T-cell (primary cell): ENCODE measurements at regions of chr15 and their contacts with region 1.

Region 1: DNA sequence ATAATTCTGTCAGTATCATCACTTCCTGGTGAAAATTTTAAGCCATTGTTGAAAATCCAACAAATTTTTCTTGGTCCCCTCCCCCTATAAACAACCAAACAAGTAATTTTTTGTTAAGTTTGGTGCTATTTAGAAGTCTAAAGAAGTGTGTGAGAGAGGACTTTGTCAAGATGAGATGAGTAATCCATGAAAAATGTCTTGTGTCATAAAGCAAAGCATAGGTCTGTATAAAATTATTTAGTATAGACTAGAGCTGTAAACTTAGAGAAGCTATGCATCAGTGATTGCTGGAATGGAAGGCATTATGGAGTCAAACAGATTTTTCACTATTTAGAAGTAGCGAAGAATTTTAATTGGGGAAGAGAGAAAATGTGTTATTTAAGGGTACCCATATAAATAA is 31.4 kb downstream of the MAPK6 start:
- DNase-seq: no peak
- ATAC-seq: no peak
- H3K4me3 ChIP-seq: no peak overlapping the region
- H3K4me3 Mint-ChIP-seq: no peak overlapping the region
- H3K27ac ChIP-seq: no peak overlapping the region
- H3K27ac Mint-ChIP-seq: no peak overlapping the region
- H3K4me1 ChIP-seq: peaks cover 7 to 9% of the 10 kb centered on the region in 2 experiments
- H3K4me1 Mint-ChIP-seq: peaks cover 15 to 25% (median 21%) of the 10 kb centered on the region in 3 donors
- H3K27me3 ChIP-seq: no peaks in the 10 kb centered on the region
- H3K27me3 Mint-ChIP-seq: no peaks in the 10 kb centered on the region

Region 2: GRCh38 chr15:52019388-52020220 is 30.8 kb before region 1 on chr15:
- CTCF ChIA-PET with region 1: interaction called, 3 to 10 read pairs
- POLR2A ChIA-PET with region 1: interaction called in 1 of 2 experiments, 7 read pairs
- DNase-seq: peak; percentile 7 to 68 (median 36)
- ATAC-seq: peak; percentile 65 to 71 (median 68)
- H3K4me3 ChIP-seq: peak overlapping the region; percentile 65 to 81
- H3K4me3 Mint-ChIP-seq: peak overlapping the region; percentile 83 to 97 (median 93)
- H3K27ac ChIP-seq: peak overlapping the region; percentile 95
- H3K27ac Mint-ChIP-seq: peak overlapping the region; percentile 96 to 98
- H3K4me1 ChIP-seq: peaks cover 16% of the 10 kb centered on the region in 2 experiments
- H3K4me1 Mint-ChIP-seq: peaks cover 37 to 38% (median 37%) of the 10 kb centered on the region in 3 donors
- H3K27me3 ChIP-seq: peaks cover 0 to 4% of the 10 kb centered on the region in 2 experiments
- H3K27me3 Mint-ChIP-seq: no peaks in the 10 kb centered on the region

Region 3: GRCh38 chr15:52163321-52164190 is 113.1 kb after region 1 on chr15:
- CTCF ChIA-PET with region 1: no interaction called
- POLR2A ChIA-PET with region 1: no interaction called
- DNase-seq: peak in 13 of 35 experiments; percentile 6 to 42 (median 16)
- ATAC-seq: peak in 2 of 4 experiments; percentile 37 to 40
- H3K4me3 ChIP-seq: no peak overlapping the region
- H3K4me3 Mint-ChIP-seq: no peak overlapping the region
- H3K27ac ChIP-seq: no peak overlapping the region
- H3K27ac Mint-ChIP-seq: no peak overlapping the region
- H3K4me1 ChIP-seq: peaks cover 2 to 5% of the 10 kb centered on the region in 2 experiments
- H3K4me1 Mint-ChIP-seq: peaks cover 34 to 44% (median 36%) of the 10 kb centered on the region in 3 donors
- H3K27me3 ChIP-seq: no peaks in the 10 kb centered on the region
- H3K27me3 Mint-ChIP-seq: no peaks in the 10 kb centered on the region